Heart right ventricle (tissue), 16 donors: ENCODE measurements at regions of chr11 and their contacts with region 1.

Region 1: DNA sequence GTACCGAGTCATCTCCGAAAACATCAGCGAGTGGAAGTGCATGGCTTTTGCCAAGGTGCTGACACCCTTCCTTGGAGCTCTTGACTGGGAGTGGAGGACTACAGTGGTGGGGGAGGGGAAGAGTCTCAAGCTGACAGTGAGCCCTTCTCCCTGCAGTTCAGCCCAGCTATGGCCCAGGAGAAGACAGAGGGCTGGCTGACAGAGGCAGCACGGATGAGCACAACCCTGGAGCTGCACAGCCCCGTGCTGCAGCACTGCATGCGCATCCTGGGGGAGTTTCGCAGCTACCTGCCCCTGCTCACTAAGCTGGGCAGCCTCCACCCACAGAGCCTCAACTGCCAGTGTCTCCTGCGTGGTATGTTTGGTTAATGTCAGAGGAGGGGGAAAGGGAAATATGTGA is 41.4 kb downstream of the DNHD1 start:
- DNase-seq: no peak
- ATAC-seq: peak in 1 of 8 donors; percentile 20
- H3K4me3 ChIP-seq: no peak overlapping the region
- H3K27ac ChIP-seq: no peak overlapping the region
- H3K4me1 ChIP-seq: no peaks in the 10 kb centered on the region
- H3K27me3 ChIP-seq: no peaks in the 10 kb centered on the region
- CTCF ChIP-seq: no peak

Region 2: GRCh38 chr11:6458352-6459098 is 79.9 kb before region 1 on chr11:
- intact Hi-C with region 1: no loop called
- DNase-seq: no peak
- ATAC-seq: peak in 1 of 8 donors; percentile 17
- H3K4me3 ChIP-seq: no peak overlapping the region
- H3K27ac ChIP-seq: no peak overlapping the region
- H3K4me1 ChIP-seq: no peaks in the 10 kb centered on the region
- H3K27me3 ChIP-seq: no peaks in the 10 kb centered on the region
- CTCF ChIP-seq: no peak

Region 3: GRCh38 chr11:6596239-6596877 is 57.9 kb after region 1 on chr11:
- intact Hi-C with region 1: loop called in 4 of 10 experiments (anchors 5 to 10 kb)
- DNase-seq: no peak
- ATAC-seq: peak in 5 of 8 donors; percentile 71 to 83 (median 73)
- H3K4me3 ChIP-seq: no peak overlapping the region
- H3K27ac ChIP-seq: peak overlapping the region in 9 of 10 donors; percentile 36 to 66 (median 56)
- H3K4me1 ChIP-seq: peaks cover 2 to 84% (median 60%) of the 10 kb centered on the region in 9 donors
- H3K27me3 ChIP-seq: no peaks in the 10 kb centered on the region
- CTCF ChIP-seq: no peak